ENCODE measurements at regions of chr20 and their contacts with region 1.

Region 1: DNA sequence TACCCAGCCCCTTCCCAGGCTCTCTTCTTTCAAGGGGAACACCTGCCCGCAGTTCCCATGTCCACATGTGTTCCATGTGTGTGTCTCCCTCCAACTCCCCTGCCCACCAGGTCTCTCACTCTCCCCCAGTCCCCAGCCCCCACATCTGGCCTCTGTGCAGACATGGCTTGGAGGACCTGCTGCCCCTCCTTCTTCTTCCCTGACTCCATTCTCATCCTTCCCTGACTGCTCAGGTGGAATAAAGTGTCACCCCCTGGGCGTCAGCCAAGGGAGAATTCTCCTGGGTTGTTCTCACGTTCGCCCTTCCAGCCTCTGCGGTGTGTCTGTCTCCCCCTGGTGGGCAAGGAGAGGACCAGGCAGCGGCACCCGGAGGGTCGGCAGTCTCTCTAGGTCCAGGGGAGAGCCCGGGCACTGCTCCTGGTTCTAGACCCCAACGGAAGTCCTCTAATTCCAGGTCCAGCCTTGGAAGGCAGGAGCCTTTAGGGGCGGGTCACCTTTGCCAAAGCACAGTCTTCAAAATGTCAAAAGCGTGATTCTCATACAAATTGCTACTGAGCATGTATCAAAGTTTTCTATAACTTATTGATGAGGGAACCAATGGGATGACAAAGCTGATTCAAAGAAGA is 50.5 kb downstream of the EBF4 start:
- DNase-seq: peak in 2 of 3 donors; percentile 65 to 66
- ATAC-seq: peak; percentile 73
- H3K4me3 ChIP-seq: no peak overlapping the region
- H3K4me1 ChIP-seq: no peaks in the 10 kb centered on the region
- CTCF ChIP-seq: peak; percentile 78

Region 2: GRCh38 chr20:2485661-2486060 is 257.4 kb before region 1 on chr20:
- intact Hi-C with region 1: loop called in 1 of 2 experiments (anchors 10 kb)
- DNase-seq: no peak
- ATAC-seq: peak; percentile 47
- H3K4me3 ChIP-seq: no peak overlapping the region
- H3K4me1 ChIP-seq: no peaks in the 10 kb centered on the region
- CTCF ChIP-seq: no peak

Region 3: DNA sequence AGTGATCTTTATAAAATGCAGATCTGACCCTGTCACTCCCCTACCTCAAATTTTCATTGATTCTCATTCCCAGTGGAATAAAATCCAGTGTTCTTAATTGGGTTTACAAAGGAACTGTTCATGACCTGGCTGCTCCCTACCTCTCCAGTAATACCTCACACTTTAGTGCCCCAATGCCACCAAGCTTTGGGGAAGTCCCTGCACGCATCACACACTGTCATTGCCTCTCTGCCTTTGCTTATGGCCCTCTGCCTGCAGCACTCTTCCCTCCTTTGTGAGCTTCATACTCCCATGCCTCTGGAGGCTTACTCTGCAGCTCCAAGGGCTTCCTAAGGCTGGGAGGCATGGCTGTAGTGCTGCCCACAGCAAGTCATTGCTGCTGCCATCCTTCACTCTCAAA is 149.3 kb before region 1 on chr20:
- intact Hi-C with region 1: no loop called
- DNase-seq: no peak
- ATAC-seq: no peak
- H3K4me3 ChIP-seq: no peak overlapping the region
- H3K4me1 ChIP-seq: no peaks in the 10 kb centered on the region
- CTCF ChIP-seq: no peak